T-cell (primary cell): ENCODE measurements at regions of chr3 and their contacts with region 1.

Region 1: DNA sequence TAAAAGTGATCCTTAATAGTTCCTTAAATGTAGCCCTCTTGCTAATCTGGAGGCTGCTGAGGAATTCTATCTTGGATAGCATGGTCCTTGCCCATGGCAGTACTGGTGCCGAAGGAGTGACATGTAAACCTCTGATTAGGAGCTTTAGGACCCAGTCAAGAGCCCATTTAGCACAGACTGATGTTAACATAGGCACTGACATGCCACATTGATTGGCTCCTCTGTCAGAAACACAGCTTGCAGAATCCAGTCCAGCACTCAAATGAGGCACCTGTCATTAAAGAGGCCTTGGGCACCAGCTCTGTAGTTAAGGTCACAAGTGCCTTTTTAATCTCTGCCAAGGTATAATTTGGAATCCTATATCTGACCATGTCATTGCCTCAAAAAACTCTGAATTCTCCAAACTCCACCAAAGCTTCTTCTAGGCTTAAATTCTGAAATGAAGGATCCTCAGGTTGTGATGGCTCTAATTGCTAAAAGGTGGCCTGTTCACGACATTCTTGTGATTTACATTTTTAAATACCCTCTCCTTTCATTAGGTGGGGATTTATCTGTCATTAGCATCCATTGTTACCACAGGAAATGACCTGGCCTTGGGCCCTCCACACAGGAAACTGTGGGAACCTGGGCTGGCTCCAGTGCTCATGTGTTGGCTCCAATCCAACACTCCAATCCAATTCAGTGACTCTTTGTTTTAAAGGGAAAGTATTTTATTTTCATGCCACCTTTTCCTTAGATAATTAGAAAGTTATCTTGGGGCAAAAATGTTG is 57.3 kb upstream of the RNF7 start:
- DNase-seq: no peak
- ATAC-seq: no peak
- H3K4me3 ChIP-seq: no peak overlapping the region
- H3K4me3 Mint-ChIP-seq: no peak overlapping the region
- H3K27ac ChIP-seq: no peak overlapping the region
- H3K27ac Mint-ChIP-seq: no peak overlapping the region
- H3K4me1 ChIP-seq: peaks cover 0 to 8% of the 10 kb centered on the region in 2 experiments
- H3K4me1 Mint-ChIP-seq: peaks cover 13 to 19% (median 15%) of the 10 kb centered on the region in 3 donors
- H3K27me3 ChIP-seq: no peaks in the 10 kb centered on the region
- H3K27me3 Mint-ChIP-seq: no peaks in the 10 kb centered on the region

Region 2: DNA sequence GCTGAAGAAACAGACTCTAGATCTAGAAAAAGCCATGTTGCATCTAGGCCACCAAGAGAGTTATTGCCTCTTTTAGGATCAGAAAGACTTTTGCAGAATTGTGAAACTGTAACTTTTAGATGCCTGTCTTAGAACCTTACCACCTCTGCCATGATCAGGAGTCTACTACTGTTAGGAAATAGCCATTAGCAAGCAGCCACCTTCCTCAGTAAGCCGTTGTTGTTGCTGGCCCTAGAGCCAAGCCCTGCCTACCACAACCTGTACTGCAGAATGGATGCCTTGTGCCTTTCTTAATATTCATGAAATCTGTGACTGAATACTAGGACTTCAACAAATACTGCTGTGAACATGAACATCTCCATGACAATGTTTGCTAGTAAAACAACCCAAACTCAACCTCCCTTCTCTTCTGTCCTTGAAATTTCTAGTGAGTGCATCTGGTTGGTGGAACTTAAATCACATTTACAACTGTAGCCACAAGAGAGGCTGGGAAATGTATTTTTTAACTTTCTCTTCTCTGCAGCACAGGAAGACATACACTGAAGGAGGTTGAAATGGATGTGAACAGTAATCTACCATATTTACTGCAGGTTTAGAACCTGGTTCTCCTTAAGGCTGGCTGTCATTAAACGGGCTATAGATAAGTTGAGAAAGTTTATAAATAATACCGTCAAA is 173.3 kb before region 1 on chr3:
- CTCF ChIA-PET with region 1: no interaction called
- POLR2A ChIA-PET with region 1: no interaction called
- DNase-seq: no peak
- ATAC-seq: peak; percentile 31 to 67 (median 44)
- H3K4me3 ChIP-seq: no peak overlapping the region
- H3K4me3 Mint-ChIP-seq: peak overlapping the region in 2 of 3 donors; percentile 37 to 53
- H3K27ac ChIP-seq: peak overlapping the region; percentile 15
- H3K27ac Mint-ChIP-seq: peak overlapping the region; percentile 37 to 49
- H3K4me1 ChIP-seq: peaks cover 22 to 58% of the 10 kb centered on the region in 2 experiments
- H3K4me1 Mint-ChIP-seq: peaks cover 54 to 56% (median 55%) of the 10 kb centered on the region in 3 donors
- H3K27me3 ChIP-seq: no peaks in the 10 kb centered on the region
- H3K27me3 Mint-ChIP-seq: no peaks in the 10 kb centered on the region

Region 3: GRCh38 chr3:141825216-141826011 is 144.6 kb after region 1 on chr3:
- CTCF ChIA-PET with region 1: no interaction called
- POLR2A ChIA-PET with region 1: interaction called in 1 of 2 experiments, 11 read pairs
- DNase-seq: no peak
- ATAC-seq: no peak
- H3K4me3 ChIP-seq: no peak overlapping the region
- H3K4me3 Mint-ChIP-seq: no peak overlapping the region
- H3K27ac ChIP-seq: no peak overlapping the region
- H3K27ac Mint-ChIP-seq: no peak overlapping the region
- H3K4me1 ChIP-seq: no peaks in the 10 kb centered on the region
- H3K4me1 Mint-ChIP-seq: no peaks in the 10 kb centered on the region
- H3K27me3 ChIP-seq: peaks cover 0 to 7% of the 10 kb centered on the region in 2 experiments
- H3K27me3 Mint-ChIP-seq: no peaks in the 10 kb centered on the region